ENCODE measurements at regions of chr1 and their contacts with region 1.

Region 1: GRCh38 chr1:212062832-212063438 is 27.4 kb downstream of the DTL start:
- DNase-seq: no peak
- ATAC-seq: peak; percentile 59
- H3K4me3 ChIP-seq: no peak overlapping the region
- H3K4me1 ChIP-seq: no peaks in the 10 kb centered on the region
- CTCF ChIP-seq: peak; percentile 13

Region 2: GRCh38 chr1:211920141-211920572 is 142.8 kb before region 1 on chr1:
- intact Hi-C with region 1: no loop called
- DNase-seq: peak in 1 of 3 donors; percentile 50
- ATAC-seq: peak; percentile 19
- H3K4me3 ChIP-seq: no peak overlapping the region
- H3K4me1 ChIP-seq: peaks cover 10% of the 10 kb centered on the region
- CTCF ChIP-seq: no peak

Region 3: GRCh38 chr1:212012034-212012740 is 50.7 kb before region 1 on chr1:
- intact Hi-C with region 1: no loop called
- DNase-seq: peak in 2 of 3 donors; percentile 62 to 79
- ATAC-seq: peak; percentile 98
- H3K4me3 ChIP-seq: no peak overlapping the region
- H3K4me1 ChIP-seq: no peaks in the 10 kb centered on the region
- CTCF ChIP-seq: peak; percentile 88

Region 4: GRCh38 chr1:212315907-212316306 is 253.0 kb after region 1 on chr1:
- intact Hi-C with region 1: loop called in 1 of 2 experiments (anchors 10 kb)
- DNase-seq: peak in 1 of 3 donors; percentile 51
- ATAC-seq: peak; percentile 71
- H3K4me3 ChIP-seq: no peak overlapping the region
- H3K4me1 ChIP-seq: no peaks in the 10 kb centered on the region
- CTCF ChIP-seq: no peak

Region 5: GRCh38 chr1:212368073-212368484 is 305.1 kb after region 1 on chr1:
- intact Hi-C with region 1: loop called in 1 of 2 experiments (anchors 10 kb)
- DNase-seq: peak in 1 of 3 donors; percentile 75
- ATAC-seq: peak; percentile 94
- H3K4me3 ChIP-seq: no peak overlapping the region
- H3K4me1 ChIP-seq: no peaks in the 10 kb centered on the region
- CTCF ChIP-seq: peak; percentile 63

Region 6: DNA sequence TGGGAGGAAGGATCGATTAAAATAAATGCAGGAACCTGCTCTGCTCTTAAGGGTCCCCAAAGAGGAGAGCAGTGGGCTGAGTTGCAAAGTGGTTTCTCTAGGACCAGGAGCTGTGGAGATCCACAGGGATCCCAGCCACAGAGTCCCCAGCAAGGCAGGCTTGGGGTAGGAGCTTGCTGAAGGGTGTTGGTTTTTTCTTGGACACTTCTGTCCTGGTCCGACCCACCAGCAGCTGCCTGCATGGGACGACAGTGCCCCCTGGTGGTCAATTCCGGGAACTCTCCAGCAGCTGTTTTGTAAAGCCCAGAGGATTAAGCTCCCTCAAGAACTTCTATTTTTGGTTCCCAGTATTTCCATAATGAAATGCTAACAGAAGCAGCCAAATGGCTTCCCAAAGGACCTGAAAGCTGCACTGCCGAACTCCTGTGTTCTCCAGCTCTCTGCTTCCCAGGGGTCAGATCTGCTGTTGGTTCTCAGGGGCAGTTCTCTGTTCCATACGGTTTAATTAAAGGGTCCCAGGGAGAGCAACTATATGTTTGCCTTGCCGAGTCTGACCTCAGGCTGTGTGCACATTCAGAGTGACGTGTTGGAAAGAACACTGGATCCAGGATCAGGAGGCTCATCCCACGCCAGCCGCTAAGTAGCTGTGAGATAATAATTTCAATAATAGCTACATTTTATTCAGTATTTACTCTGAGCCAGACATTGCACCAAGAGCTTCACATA is 393.0 kb after region 1 on chr1:
- intact Hi-C with region 1: loop called (anchors 10 kb)
- DNase-seq: peak; percentile 78 to 93 (median 89)
- ATAC-seq: peak; percentile 84
- H3K4me3 ChIP-seq: no peak overlapping the region
- H3K4me1 ChIP-seq: no peaks in the 10 kb centered on the region
- CTCF ChIP-seq: peak; percentile 94

Measured in mucosa of descending colon (tissue), 3 donors.